ENCODE measurements at regions of chr6 and their contacts with region 1.

Region 1: GRCh38 chr6:17281100-17281494 is at the start of gene RBM24:
- DNase-seq: peak; percentile 64
- H3K4me3 ChIP-seq: peak within 1 kb of the TSS; percentile 48 to 87 (median 65)
- H3K27ac ChIP-seq: peak within 1 kb of the TSS in 2 of 3 donors; percentile 55 to 60
- H3K4me1 ChIP-seq: peaks cover 0 to 5% of the 10 kb centered on the region in 2 donors
- H3K27me3 ChIP-seq: no peaks in the 10 kb centered on the region
- CTCF ChIP-seq: peak in 2 of 6 experiments; percentile 35 to 36
- POLR2A ChIP-seq: no peak
- total RNA-seq, gene RBM24: 0.45 to 5.3 (median 1.6) TPM

Region 2: DNA sequence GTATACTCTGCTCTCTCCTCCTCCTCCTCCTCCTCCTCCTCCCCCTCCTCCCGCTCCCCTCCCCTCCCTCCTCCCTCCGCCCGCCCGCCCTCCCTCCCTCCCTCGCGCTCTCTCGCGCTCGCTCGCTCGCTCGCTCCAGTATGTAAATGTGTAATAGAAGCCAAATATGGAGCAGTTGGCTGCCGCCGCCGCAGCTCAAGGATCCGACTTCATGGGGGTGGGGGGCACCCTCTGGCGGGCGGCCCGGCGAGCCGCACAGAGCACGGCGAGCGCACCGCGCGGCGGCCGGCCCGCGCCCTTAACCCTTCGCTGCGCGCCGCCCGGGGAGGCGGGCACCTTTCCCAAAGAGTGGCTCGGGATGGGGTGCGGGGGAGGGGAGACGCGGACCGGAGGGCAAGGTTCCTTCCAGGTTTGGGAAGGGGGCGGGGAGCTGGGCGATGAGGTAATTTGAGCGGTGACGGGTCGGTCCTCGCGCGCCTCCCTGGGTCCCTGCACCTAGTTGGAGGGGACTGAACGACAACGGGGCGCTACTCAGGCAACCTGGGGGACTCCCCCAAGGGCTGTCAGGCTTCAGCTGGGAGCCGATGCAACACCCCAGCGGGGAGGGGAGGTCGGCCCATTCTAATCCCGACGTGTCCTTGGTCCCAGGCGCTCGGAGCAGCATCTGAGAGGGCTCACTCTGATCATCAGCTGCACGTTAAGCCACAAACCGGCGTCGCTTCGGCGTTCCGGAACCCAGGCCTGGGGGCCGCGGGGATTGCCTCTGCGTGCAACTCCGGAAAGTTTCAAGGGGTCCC is 519.4 kb before region 1 on chr6:
- intact Hi-C with region 1: no loop called
- DNase-seq: peak; percentile 95 to 96
- H3K4me3 ChIP-seq: peak overlapping the region; percentile 9 to 90 (median 44)
- H3K27ac ChIP-seq: peak overlapping the region; percentile 93 to 99 (median 98)
- H3K4me1 ChIP-seq: peaks cover 30% of the 10 kb centered on the region in 2 donors
- H3K27me3 ChIP-seq: no peaks in the 10 kb centered on the region
- CTCF ChIP-seq: peak in 3 of 6 experiments; percentile 19 to 36 (median 32)
- POLR2A ChIP-seq: peak in 1 of 2 donors; percentile 79

Region 3: GRCh38 chr6:17101422-17102257 is 179.5 kb before region 1 on chr6 and contains the start of gene STMND1:
- intact Hi-C with region 1: no loop called
- DNase-seq: peak; percentile 47 to 57
- H3K4me3 ChIP-seq: peak within 1 kb of the TSS in 2 of 3 donors; percentile 9 to 17
- H3K27ac ChIP-seq: no peak within 1 kb of the TSS
- H3K4me1 ChIP-seq: peaks cover 0 to 9% of the 10 kb centered on the region in 2 donors
- H3K27me3 ChIP-seq: no peaks in the 10 kb centered on the region
- CTCF ChIP-seq: no peak
- POLR2A ChIP-seq: no peak
- total RNA-seq, gene STMND1: not detected

Region 4: GRCh38 chr6:17392978-17393891 is 112.1 kb after region 1 on chr6 and contains the start of gene CAP2:
- intact Hi-C with region 1: loop called (anchors 10 kb)
- DNase-seq: peak; percentile 81
- H3K4me3 ChIP-seq: peak within 1 kb of the TSS; percentile 75 to 84 (median 81)
- H3K27ac ChIP-seq: peak within 1 kb of the TSS; percentile 90 to 95 (median 92)
- H3K4me1 ChIP-seq: peaks cover 4 to 5% of the 10 kb centered on the region in 2 donors
- H3K27me3 ChIP-seq: no peaks in the 10 kb centered on the region
- CTCF ChIP-seq: no peak
- POLR2A ChIP-seq: peak in 1 of 2 donors; percentile 55
- total RNA-seq, gene CAP2: 3.2 to 16.2 (median 10.6) TPM

Measured in thyroid gland (tissue), 4 donors.